Sigmoid colon (tissue), 7 donors: ENCODE measurements at regions of chr10 and their contacts with region 1.

Region 1: GRCh38 chr10:79249186-79250121 is 97.8 kb upstream of the PPIF start:
- DNase-seq: no peak
- H3K4me3 ChIP-seq: no peak overlapping the region
- H3K27ac ChIP-seq: peak overlapping the region; percentile 22 to 98 (median 94)
- H3K4me1 ChIP-seq: peaks cover 0 to 97% (median 88%) of the 10 kb centered on the region in 4 donors
- H3K27me3 ChIP-seq: no peaks in the 10 kb centered on the region
- CTCF ChIP-seq: no peak
- EP300 ChIP-seq: no peak
- POLR2A ChIP-seq: no peak

Region 2: DNA sequence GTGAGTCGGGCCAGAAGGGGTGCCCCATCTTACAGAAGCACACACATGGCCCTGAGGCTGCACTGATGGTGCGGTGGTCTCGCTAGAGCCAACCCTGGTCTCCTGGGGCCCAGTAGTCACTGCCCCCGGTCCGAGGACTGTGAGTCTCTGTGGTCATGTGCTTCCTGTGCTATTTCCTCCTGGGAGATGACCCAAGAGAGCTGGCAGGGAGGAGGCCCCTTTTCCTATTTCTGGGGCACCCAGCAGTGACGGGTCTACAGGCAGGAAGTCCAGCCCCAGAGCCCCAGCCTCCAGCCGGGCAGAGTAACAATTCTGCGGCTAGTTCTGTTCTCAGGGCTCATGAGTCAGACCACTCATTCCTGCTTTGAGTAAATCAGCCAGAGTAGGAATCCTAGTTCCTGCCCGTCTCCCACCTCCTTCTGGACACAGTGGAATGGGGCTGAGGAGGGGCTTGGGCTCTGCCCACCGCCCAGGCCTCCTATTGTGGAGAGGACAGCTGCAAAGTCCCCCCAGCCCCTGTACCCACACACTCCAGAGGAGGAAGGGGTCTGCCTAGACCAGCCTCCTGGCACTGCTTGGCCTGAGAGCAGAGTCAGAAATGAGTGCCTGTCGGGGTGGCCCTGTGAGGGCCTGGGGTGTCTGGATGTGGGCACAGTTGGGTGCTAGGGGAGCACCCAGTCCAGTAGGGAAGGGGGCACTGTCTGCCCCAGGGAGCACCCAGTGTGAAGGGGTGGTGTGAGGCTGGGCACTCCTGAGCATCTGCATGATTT is 17.3 kb after region 1 on chr10:
- intact Hi-C with region 1: loop called (anchors 2 kb)
- DNase-seq: peak; percentile 90
- H3K4me3 ChIP-seq: no peak overlapping the region
- H3K27ac ChIP-seq: peak overlapping the region; percentile 60 to 96 (median 90)
- H3K4me1 ChIP-seq: peaks cover 0 to 100% (median 98%) of the 10 kb centered on the region in 4 donors
- H3K27me3 ChIP-seq: no peaks in the 10 kb centered on the region
- CTCF ChIP-seq: no peak
- EP300 ChIP-seq: no peak
- POLR2A ChIP-seq: no peak

Region 3: GRCh38 chr10:79285315-79286197 is 36.1 kb after region 1 on chr10:
- intact Hi-C with region 1: no loop called
- DNase-seq: no peak
- H3K4me3 ChIP-seq: no peak overlapping the region
- H3K27ac ChIP-seq: peak overlapping the region; percentile 59 to 72 (median 62)
- H3K4me1 ChIP-seq: peaks cover 0 to 53% (median 43%) of the 10 kb centered on the region in 4 donors
- H3K27me3 ChIP-seq: no peaks in the 10 kb centered on the region
- CTCF ChIP-seq: no peak
- EP300 ChIP-seq: no peak
- POLR2A ChIP-seq: no peak